IMR-90 (cell line): ENCODE measurements at regions of chrX and their contacts with region 1.

Region 1: DNA sequence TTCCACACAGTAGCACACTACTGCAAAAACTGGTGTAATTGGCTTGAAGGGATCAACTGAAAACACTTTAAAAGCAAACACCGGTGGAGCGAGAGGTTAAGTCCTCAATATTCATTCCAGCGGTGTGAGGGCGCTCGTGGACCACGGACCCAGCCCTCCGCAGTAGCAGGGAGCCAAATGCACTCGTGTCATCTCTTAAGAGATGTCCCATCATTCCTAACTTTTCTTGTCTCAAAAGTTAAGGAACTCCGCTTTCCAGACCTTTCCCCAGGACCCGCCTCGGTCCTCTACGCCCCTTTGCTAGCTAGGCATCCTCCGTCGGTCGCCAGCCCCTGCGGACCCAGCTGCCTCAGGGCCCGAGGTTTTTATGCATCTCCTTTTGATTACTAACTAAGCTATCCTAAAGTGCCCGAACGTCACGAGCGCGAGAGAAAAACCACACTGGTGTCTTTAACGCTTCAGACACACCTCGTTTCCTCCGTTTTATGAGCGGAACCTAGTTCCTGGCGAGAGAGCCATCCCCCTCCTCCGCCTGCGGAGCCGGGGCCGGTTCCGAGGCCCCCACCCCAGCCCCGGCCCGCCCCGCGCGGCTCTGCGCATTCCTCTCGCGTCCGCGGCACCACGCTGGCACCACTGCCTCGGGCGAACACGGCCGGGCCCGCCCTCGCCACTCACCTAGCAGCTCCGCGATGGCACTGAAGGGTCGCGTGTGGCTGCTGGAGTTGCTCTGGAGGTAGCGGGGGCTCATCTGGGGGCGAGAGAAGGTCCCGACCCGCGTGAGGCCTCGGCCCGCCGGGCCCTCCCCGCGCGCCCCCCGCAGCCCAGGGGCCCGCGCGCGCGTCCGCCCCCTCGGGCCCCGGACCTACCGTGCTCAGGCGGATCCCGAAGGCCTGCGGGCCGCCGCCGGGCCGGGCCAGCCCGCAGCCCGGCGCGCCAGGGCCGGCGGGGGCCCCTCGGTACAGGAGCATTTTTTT is 723 bp downstream of the MORC4 start:
- DNase-seq: peak; percentile 49
- ATAC-seq: peak; percentile 71
- H3K4me3 ChIP-seq: peak overlapping the region; percentile 62
- H3K27ac ChIP-seq: peak overlapping the region; percentile 36
- H3K4me1 ChIP-seq: no peaks in the 10 kb centered on the region
- H3K27me3 ChIP-seq: peaks cover 3% of the 10 kb centered on the region; the same call in 1 of the 2 replicates
- CTCF ChIP-seq: peak; percentile 53
- POLR2A ChIP-seq: no peak
- RAD21 ChIP-seq: peak; percentile 56

Region 2: DNA sequence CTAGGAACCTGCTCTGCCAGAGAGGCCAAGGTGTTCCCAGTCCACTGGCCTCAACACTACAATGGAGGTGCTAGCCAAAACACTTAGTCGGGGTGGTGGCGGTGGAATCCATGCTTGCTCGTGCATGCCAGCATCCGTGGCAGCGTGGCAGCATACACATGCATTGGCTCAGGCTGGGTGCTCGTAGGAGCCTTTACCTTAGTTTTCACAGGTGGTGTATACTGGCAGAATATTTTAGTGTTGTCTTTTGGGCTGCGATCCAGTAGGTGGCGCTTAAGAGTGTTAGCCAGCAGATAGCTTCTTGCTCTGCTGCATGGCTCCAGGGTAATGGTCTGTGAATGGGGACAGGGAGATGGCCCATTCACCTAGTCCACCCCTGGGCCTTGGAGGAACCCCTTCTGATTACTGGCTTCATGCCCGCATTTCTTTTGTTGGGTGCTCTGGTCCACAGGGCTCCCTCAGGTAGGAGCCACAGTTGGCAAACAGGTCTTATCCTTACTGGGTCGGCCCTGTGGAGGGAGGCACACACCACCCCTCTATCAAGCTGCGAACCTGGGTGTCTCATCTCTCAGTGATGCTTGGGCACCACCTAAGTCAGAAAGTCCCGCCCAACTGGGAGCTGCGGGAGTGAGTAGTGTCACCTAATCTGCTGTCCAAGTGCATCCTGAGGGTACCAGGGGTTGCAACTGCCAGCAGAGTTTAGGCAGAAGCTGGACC is 136.2 kb before region 1 on chrX:
- CTCF ChIA-PET with region 1: no interaction called
- POLR2A ChIA-PET with region 1: no interaction called
- dilution Hi-C with region 1: no loop called
- in situ Hi-C with region 1: no loop called
- intact Hi-C with region 1: no loop called
- DNase-seq: peak; percentile 2
- ATAC-seq: peak; percentile 46; the same call in 1 of the 2 replicates
- H3K4me3 ChIP-seq: no peak overlapping the region
- H3K27ac ChIP-seq: no peak overlapping the region
- H3K4me1 ChIP-seq: no peaks in the 10 kb centered on the region
- H3K27me3 ChIP-seq: peaks cover 4% of the 10 kb centered on the region; the same call in 1 of the 2 replicates
- CTCF ChIP-seq: peak; percentile 32; the same call in 1 of the 2 replicates
- POLR2A ChIP-seq: no peak
- RAD21 ChIP-seq: no peak

Region 3: GRCh38 chrX:106917830-106918500 is 81.3 kb before region 1 on chrX:
- CTCF ChIA-PET with region 1: no interaction called
- POLR2A ChIA-PET with region 1: interaction called, 13 read pairs
- dilution Hi-C with region 1: no loop called
- in situ Hi-C with region 1: no loop called
- intact Hi-C with region 1: no loop called
- DNase-seq: peak; percentile 71
- ATAC-seq: no peak; the same call in 1 of the 2 replicates
- H3K4me3 ChIP-seq: no peak overlapping the region
- H3K27ac ChIP-seq: no peak overlapping the region
- H3K4me1 ChIP-seq: no peaks in the 10 kb centered on the region
- H3K27me3 ChIP-seq: peaks cover 11% of the 10 kb centered on the region
- CTCF ChIP-seq: no peak
- POLR2A ChIP-seq: no peak
- RAD21 ChIP-seq: no peak